ENCODE measurements at regions of chr4 and their contacts with region 1.

Region 1: DNA sequence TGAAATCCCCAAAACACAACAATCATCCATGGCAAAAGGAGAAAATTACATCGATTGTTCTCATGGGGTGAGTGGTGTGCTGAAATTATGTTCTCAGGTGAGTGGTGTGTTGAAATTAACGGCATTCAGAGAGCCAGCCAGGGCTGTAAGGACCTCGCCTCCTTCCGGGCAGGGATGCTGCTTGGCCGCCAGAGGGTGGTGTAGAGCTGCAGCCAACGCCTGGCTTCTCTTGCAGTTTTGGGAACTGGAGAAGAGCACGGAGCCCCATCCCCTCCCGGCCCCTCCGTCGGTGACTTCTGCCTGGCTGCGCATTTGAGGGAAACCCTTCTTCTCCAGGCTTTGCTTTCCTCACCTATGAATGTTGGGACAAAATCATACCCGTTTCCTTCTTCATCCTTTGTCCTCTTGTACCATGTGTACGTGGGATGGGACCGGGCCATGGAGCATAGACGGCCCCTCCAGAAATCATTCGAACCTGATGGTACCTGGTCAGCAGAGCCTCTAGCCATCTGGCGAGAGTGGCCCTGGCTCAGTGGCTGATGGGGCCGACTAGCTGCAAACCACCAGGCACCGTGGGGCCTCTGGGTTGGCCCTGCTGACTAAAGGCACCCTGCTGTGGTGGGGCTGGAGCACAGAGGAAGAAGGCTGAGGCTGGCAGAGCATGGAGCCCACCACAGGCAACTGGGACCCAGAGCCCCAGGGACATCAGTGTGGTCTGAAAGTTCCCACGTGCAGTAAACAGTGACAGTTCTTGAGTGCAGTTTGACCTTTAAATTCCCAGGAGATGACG is 28.4 kb downstream of the TRMT44 start:
- DNase-seq: peak; percentile 7
- H3K4me3 ChIP-seq: no peak overlapping the region
- CTCF ChIP-seq: peak; percentile 98

Region 2: DNA sequence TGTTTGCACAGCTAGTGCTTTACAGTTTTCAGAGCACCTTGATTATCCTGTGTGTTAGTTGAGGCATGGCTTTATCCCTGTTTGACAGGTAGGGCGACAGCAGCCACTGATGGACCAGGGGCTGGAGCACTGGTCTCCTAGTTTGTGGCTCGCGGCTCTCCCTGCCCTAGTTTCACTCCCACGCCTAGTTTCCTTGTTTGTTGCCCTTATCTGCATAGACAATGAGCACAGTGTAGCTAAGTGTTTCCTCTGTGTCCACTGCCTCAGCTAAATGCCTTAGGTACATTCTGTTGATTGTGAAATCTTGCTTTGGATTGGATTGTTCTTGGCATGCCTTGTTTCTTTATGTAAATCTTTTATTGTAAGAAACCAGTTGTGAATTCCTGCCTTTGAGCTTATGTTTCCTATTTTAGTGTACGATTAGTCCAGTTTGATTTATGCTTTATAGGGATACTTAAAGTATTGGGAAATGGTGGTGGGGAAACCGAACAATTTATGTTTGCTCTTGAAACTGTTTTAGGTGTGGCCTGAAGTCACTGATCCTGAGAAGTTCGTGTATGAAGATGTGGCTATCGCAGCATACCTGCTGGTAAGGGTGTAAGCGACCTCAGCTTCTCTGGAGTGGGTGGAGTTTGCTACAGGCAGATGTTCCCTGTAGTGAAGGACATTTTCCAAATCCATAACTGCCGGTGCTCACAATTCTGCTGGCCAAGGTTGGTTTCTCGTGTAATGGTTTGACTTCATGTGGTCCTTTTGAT is 17.3 kb before region 1 on chr4:
- CTCF ChIA-PET with region 1: interaction called, 37 read pairs
- POLR2A ChIA-PET with region 1: no interaction called
- DNase-seq: no peak
- H3K4me3 ChIP-seq: no peak overlapping the region
- CTCF ChIP-seq: no peak

Region 3: GRCh38 chr4:8493484-8493883 is 24.5 kb after region 1 on chr4:
- CTCF ChIA-PET with region 1: interaction called, 13 read pairs
- POLR2A ChIA-PET with region 1: no interaction called
- DNase-seq: no peak
- H3K4me3 ChIP-seq: no peak overlapping the region
- CTCF ChIP-seq: no peak

Region 4: DNA sequence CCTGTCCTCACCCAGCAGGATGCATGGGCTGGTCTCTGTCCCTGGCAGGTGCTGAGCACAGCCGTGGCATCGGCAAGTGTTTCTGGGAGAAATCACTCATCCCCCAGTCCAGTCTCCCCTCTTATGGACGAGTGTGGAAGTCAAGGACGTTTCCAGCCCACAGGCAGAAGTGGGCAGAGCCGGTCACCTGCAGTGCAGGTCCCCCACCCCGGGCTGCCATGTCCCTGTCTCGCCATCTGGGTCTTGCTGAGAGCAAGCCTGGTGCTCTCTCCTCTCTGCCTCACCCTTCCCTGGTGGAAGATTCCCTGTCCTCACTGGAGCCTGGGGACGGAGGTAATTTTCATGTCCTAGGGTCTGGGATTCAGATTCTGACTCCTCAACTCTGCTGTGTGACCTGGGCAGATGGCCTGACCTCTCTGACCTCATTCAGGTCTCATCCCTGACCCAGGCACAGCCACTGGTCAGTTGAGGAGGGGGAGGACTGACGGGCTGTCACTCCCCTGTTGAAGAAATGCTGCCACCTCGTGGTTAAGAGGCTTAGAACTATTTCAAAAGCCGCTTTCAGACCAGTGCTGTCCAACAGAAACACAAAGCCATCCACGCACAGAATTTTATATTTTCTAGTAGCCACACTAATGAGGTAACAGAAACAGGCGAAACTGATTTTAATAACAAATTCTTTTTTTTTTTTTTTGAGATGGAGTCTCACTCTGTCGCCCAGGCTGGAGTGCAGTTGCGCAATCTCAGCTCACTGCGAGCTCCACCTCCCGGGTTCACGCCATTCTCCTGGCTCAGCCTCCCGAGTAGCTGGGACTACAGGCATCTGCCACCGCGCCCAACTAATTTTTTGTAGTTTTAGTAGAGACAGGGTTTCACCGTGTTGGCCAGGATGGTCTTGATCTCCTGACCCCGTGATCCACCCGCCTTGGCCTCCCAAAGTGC is 125.4 kb after region 1 on chr4:
- CTCF ChIA-PET with region 1: interaction called, 202 read pairs
- POLR2A ChIA-PET with region 1: interaction called, 12 read pairs
- DNase-seq: peak; percentile 28
- H3K4me3 ChIP-seq: peak overlapping the region; percentile 82
- CTCF ChIP-seq: peak; percentile 66

Region 5: GRCh38 chr4:8607603-8608481 is 138.9 kb after region 1 on chr4:
- CTCF ChIA-PET with region 1: interaction called, 121 read pairs
- POLR2A ChIA-PET with region 1: no interaction called
- DNase-seq: no peak
- H3K4me3 ChIP-seq: no peak overlapping the region
- CTCF ChIP-seq: peak; percentile 97